Heart left ventricle (tissue), 16 donors: ENCODE measurements at regions of chr1 and their contacts with region 1.

Region 1: GRCh38 chr1:64469977-64470664 is at the start of gene CACHD1:
- DNase-seq: peak; percentile 79 to 85 (median 80)
- ATAC-seq: peak; percentile 59 to 90 (median 87)
- H3K4me3 ChIP-seq: peak within 1 kb of the TSS; percentile 64 to 90 (median 74)
- H3K27ac ChIP-seq: peak within 1 kb of the TSS; percentile 58 to 87 (median 81)
- H3K4me1 ChIP-seq: peaks cover 1 to 30% (median 10%) of the 10 kb centered on the region in 12 donors
- H3K27me3 ChIP-seq: peaks cover 0 to 41% (median 0%) of the 10 kb centered on the region in 9 donors
- CTCF ChIP-seq: peak in 10 of 12 donors; percentile 26 to 71 (median 48)
- POLR2A ChIP-seq: peak in 1 of 2 donors; percentile 62
- total RNA-seq, gene CACHD1: 1.3 to 10.0 (median 2.6) TPM

Region 2: DNA sequence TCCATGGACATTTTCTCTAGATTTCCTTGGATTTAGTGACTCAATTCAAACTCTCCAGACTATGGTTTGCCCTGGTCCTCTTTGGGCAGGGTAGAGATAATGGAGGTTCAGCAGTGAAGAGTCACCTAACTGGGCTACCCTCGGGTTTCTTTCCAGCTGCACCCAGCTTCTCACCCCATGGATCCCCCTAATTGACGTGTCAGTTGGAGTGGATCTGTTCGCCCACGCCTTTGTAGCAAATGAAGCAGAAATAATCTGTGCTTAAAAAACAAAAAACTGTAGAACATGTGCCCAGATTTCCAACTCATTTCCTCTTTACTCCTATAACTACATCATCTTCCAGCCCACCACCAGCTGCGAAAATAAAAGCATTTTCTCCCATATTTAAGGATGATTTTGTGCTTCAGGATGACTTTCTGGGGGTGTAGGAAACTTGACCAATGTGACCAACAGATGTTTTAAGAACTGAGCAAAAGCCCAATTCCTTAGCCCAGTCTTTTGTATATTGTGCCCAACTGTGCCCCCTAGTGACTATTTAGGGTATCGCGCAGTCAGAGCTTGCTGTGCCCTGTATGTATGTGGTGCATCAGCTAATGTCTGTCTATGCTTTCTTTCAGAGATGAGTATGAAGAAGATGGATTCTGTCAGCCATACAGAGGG is 333.2 kb before region 1 on chr1:
- intact Hi-C with region 1: no loop called
- DNase-seq: peak in 4 of 5 donors; percentile 64 to 77 (median 66)
- ATAC-seq: peak; percentile 53 to 87 (median 83)
- H3K4me3 ChIP-seq: no peak overlapping the region
- H3K27ac ChIP-seq: peak overlapping the region in 6 of 12 donors; percentile 4 to 55 (median 28)
- H3K4me1 ChIP-seq: peaks cover 0 to 24% (median 4%) of the 10 kb centered on the region in 12 donors
- H3K27me3 ChIP-seq: no peaks in the 10 kb centered on the region
- CTCF ChIP-seq: peak; percentile 77 to 94 (median 87)
- POLR2A ChIP-seq: no peak

Region 3: GRCh38 chr1:64515427-64515826 is 45.3 kb after region 1 on chr1:
- intact Hi-C with region 1: loop called in 4 of 10 experiments (anchors 5 kb)
- DNase-seq: peak in 4 of 5 donors; percentile 29 to 64 (median 45)
- ATAC-seq: peak; percentile 72 to 82 (median 78)
- H3K4me3 ChIP-seq: no peak overlapping the region
- H3K27ac ChIP-seq: peak overlapping the region in 3 of 12 donors; percentile 5 to 60 (median 7)
- H3K4me1 ChIP-seq: peaks cover 3 to 80% (median 57%) of the 10 kb centered on the region in 12 donors
- H3K27me3 ChIP-seq: no peaks in the 10 kb centered on the region
- CTCF ChIP-seq: no peak
- POLR2A ChIP-seq: no peak

Region 4: DNA sequence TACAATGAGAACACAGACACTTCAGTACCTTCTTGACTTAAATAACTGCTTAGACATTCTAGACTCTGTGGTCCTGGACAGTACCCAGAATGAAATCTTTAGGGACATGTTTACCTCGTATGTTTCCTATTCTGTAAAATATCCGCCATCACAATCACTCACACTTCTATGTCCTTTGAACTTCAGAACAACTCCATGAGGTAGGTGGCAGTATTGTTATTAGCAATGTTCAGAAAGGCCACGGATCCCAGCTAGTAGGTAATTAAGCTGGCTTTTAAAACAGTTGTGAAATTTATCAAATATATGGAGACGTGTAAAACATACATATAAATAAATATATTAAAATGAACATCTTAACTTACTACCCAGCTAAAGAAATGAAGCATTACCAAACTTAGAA is 83.2 kb after region 1 on chr1:
- intact Hi-C with region 1: loop called in 4 of 10 experiments (anchors 5 to 10 kb)
- DNase-seq: no peak
- ATAC-seq: no peak
- H3K4me3 ChIP-seq: no peak overlapping the region
- H3K27ac ChIP-seq: no peak overlapping the region
- H3K4me1 ChIP-seq: peaks cover 0 to 23% (median 0%) of the 10 kb centered on the region in 12 donors
- H3K27me3 ChIP-seq: no peaks in the 10 kb centered on the region
- CTCF ChIP-seq: peak in 6 of 12 donors; percentile 19 to 43 (median 24)
- POLR2A ChIP-seq: no peak

Region 5: DNA sequence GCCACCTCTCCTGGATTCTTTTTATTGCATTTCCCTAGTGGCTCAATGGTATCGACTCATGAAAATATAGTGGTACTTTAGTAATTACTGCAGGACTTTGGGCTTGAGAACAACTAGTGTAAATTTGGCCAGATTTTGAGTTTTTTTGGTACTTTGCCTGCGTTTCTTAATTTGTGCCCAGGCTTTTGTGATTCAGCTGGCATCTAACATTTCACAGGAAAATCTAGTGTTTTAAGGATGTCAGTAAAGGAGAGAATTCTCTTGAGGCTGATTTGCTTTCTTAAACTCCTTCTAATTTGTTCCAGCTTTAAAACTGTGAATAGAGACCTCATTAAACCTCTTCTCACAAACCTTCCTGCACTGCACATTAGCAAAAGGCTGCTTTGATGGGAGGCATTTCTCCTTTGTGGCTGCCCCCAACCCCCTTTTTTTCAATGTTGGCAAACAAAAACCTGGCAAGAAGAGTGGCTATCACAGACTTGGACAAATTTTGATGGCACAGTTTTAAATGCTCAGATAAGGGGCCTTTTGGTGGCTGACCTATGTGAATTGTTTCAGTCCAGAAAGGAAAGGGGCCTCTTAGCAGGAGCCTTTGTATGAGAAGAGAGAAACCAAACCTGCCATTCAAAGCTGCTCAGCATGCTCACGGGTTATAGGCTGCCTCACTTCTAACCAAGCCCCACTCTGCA is 161.4 kb after region 1 on chr1:
- intact Hi-C with region 1: loop called in 2 of 10 experiments (anchors 10 kb)
- DNase-seq: no peak
- ATAC-seq: no peak
- H3K4me3 ChIP-seq: no peak overlapping the region
- H3K27ac ChIP-seq: no peak overlapping the region
- H3K4me1 ChIP-seq: peaks cover 0 to 35% (median 2%) of the 10 kb centered on the region in 12 donors
- H3K27me3 ChIP-seq: no peaks in the 10 kb centered on the region
- CTCF ChIP-seq: no peak
- POLR2A ChIP-seq: no peak

Region 6: GRCh38 chr1:64675718-64676345 is 205.7 kb after region 1 on chr1:
- intact Hi-C with region 1: loop called in 7 of 10 experiments (anchors 2 to 10 kb)
- DNase-seq: no peak
- ATAC-seq: no peak
- H3K4me3 ChIP-seq: no peak overlapping the region
- H3K27ac ChIP-seq: no peak overlapping the region
- H3K4me1 ChIP-seq: peaks cover 0 to 9% (median 0%) of the 10 kb centered on the region in 12 donors
- H3K27me3 ChIP-seq: no peaks in the 10 kb centered on the region
- CTCF ChIP-seq: peak; percentile 58 to 85 (median 72)
- POLR2A ChIP-seq: no peak